ENCODE measurements at regions of chr9 and their contacts with region 1.

Region 1: DNA sequence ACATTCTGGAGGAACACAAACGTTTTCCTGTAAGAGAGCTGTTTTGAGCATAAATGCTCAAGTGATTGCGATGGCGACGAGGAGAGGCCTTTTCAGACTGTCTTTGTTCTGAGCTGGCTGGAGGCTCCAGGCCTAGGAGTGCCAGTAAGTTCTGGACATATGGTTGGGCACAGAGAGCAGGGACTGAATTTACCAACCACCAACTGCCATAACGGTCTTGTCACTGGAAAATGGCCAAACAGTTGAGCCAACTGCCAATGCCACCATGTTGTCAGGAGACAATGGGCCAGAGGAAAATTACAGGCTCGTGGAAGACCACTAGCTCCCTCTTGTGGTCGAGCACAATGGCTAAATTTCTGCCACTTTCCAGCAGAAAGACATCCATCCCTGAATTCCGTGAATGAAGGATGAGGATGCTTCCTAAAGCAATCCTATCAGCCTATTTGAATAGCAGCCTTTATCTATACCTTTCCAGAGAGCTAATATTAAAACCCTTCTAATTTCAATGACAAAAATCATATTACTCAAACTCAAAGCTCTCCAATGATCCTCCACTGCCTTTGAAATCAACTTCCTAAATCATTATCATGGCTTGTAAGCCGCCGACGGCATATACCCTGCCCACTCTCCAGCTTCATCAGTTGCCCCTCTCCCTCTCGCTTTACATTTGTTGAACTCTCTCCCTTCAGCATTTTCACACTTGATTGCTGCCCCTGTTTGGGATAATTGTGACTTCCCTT is 66.9 kb upstream of the GLIS3 start:
- DNase-seq: peak in 9 of 10 donors; percentile 47 to 80 (median 68)
- H3K4me3 ChIP-seq: no peak overlapping the region
- H3K27ac ChIP-seq: peak overlapping the region in 45 of 59 donors; percentile 3 to 85 (median 55)
- H3K27me3 ChIP-seq: no peaks in the 10 kb centered on the region
- CTCF ChIP-seq: peak; percentile 62 to 89 (median 80)

Region 2: DNA sequence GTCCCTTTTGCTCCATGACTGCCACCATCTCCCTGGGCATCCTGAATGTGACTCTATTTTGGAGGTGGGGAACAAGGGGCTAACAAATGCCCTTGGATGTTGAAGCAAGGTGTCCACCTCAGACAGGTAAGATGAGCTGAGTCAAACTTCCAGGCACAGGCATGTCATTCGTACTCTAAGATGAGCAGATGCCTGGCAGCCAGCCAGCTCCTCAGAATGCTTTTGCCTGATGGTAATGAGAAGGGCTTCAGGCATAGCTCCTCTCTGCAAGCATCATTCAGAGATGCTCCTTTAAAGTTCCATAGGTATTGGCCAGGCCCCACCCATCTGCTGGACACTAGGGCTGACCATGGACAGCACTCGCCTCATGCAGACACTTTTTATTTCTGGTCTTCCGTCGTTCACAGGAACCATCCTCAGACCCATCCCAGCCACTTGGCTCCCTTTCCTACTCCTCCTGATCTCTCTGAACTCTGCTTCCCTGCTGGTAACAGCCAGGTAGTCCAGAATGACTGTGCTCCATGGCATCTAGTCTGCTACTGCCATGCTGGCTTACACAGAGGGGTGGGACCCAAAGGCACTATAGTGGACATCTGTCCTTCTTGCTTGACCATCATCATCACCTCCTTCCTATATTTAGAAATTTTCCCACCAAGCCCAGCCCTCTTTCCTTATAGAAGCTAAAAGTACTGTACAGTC is 185.7 kb before region 1 on chr9:
- intact Hi-C with region 1: no loop called
- DNase-seq: no peak
- H3K4me3 ChIP-seq: no peak overlapping the region
- H3K27ac ChIP-seq: no peak overlapping the region
- H3K27me3 ChIP-seq: no peaks in the 10 kb centered on the region
- CTCF ChIP-seq: no peak

Region 3: GRCh38 chr9:4315582-4316215 is 51.1 kb before region 1 on chr9:
- intact Hi-C with region 1: loop called (anchors 2 to 5 kb)
- DNase-seq: peak in 9 of 10 donors; percentile 51 to 80 (median 73)
- H3K4me3 ChIP-seq: no peak overlapping the region
- H3K27ac ChIP-seq: no peak overlapping the region
- H3K27me3 ChIP-seq: no peaks in the 10 kb centered on the region
- CTCF ChIP-seq: peak; percentile 36 to 92 (median 82)

Region 4: DNA sequence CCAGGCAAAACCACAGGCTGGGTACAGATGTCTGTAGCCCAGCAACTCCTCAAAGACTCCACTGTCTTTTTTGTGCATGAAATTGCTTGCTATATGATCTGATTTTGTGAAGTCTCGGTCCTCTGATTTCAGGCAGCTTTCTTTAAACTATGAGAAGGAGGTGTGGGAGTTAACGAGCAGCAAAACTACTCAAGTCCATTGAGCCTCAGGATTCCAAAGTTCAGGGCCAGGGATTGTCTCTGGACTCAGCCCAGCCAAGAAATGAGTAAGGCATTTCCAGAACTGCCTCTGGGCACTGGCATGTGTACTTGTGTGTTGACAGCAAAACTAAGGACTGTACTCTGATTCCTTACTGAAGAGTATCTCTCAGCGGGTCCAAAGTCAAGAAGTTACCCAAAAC is 13.5 kb before region 1 on chr9:
- intact Hi-C with region 1: no loop called
- DNase-seq: no peak
- H3K4me3 ChIP-seq: no peak overlapping the region
- H3K27ac ChIP-seq: no peak overlapping the region
- H3K27me3 ChIP-seq: no peaks in the 10 kb centered on the region
- CTCF ChIP-seq: no peak

Region 5: DNA sequence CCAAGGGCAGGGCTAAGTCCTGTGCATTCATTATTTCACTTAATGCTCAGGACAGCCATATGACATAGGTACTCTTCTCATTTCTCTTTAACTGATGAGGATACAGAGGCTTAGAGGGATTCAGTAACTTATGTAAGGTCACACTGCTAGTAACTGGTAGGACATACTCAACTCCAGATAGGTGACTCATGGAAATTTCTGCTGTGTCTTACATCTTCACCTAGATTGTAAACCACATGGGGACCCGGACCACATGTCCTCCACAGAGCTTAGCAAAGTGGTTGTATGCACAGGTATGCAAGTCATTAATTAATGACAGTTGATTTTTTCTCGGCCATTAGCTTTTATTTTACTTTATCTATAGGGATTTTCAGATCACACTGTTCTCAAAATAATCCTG is 152.8 kb after region 1 on chr9:
- intact Hi-C with region 1: no loop called
- DNase-seq: no peak
- H3K4me3 ChIP-seq: no peak overlapping the region
- H3K27ac ChIP-seq: no peak overlapping the region
- H3K27me3 ChIP-seq: no peaks in the 10 kb centered on the region
- CTCF ChIP-seq: no peak

Measured in dorsolateral prefrontal cortex (tissue), 120 donors.